ENCODE measurements at regions of chrX and their contacts with region 1.

Region 1: DNA sequence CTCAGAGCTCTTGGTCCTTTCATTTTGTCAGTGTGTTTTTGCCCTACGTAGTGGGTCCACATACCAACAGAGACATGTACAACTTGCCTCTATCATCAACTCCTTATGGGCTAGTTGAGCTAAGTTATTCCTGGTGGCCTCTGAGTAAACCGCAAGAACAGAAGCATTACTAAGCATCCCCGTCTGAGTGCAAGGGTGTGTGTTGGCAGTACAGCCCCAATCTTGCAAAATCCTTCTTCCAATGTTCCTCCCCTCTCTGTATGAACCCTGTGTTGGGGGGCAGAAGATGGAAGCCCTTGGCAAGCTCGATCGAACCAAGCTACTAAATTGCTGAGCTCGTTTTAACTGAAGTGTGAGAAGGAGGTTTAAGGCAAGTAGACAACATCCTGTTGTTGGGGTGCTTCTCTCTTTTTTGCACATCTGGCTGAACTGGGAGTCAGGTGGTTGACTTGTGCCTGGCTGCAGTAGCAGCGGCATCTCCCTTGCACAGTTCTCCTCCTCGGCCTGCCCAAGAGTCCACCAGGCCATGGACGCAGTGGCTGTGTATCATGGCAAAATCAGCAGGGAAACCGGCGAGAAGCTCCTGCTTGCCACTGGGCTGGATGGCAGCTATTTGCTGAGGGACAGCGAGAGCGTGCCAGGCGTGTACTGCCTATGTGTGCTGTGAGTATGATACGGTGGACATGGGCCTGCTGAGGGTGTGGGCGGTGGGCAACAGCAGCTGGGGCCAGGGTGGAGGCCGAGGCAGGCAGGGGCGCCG is at the start of gene SH2D1A:
- DNase-seq: peak; percentile 41
- ATAC-seq: peak; percentile 28
- H3K4me3 Mint-ChIP-seq: peak within 1 kb of the TSS; percentile 93
- H3K27ac Mint-ChIP-seq: peak within 1 kb of the TSS; percentile 97
- H3K4me1 Mint-ChIP-seq: peaks cover 46% of the 10 kb centered on the region
- H3K27me3 Mint-ChIP-seq: no peaks in the 10 kb centered on the region
- CTCF ChIP-seq: no peak
- total RNA-seq, gene SH2D1A: 40.9 to 43.2 TPM

Region 2: DNA sequence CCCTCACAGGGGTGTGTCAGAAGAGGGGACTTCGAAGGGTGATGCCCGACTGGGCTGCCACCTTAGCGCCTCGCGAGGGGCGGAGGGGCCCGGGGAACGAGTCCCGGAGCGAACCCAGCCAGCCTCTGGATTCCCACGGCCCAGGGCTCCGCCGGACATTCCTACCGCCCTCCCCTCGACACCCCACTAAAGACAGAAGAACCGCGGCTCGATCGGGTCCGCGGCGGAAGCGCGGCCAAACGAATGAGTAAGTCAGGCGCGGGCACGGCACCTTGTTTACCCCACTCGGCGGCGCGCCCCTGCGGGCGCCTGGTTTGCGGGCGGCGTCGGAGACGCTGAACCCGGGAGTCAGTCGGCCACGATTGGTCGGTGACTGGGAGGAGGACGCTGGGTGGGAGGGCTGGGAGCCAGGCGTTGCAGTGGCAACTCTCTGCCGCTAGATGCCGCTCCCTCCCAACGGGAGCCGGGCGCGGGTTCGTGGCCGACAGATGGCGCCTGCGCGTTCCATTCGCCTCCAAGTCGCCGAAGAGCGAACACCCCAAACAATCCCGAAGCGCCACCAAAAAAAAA is 386.2 kb before region 1 on chrX:
- CTCF ChIA-PET with region 1: no interaction called
- POLR2A ChIA-PET with region 1: interaction called, 3 read pairs
- intact Hi-C with region 1: loop called (anchors 5 kb)
- DNase-seq: peak; percentile 92
- ATAC-seq: peak; percentile 68
- H3K4me3 Mint-ChIP-seq: peak overlapping the region; percentile 98
- H3K27ac Mint-ChIP-seq: peak overlapping the region; percentile 100
- H3K4me1 Mint-ChIP-seq: peaks cover 10% of the 10 kb centered on the region
- H3K27me3 Mint-ChIP-seq: no peaks in the 10 kb centered on the region
- CTCF ChIP-seq: peak; percentile 66

Region 3: GRCh38 chrX:124217304-124218251 is 128.7 kb before region 1 on chrX:
- CTCF ChIA-PET with region 1: interaction called, 12 read pairs
- POLR2A ChIA-PET with region 1: interaction called, 48 read pairs
- intact Hi-C with region 1: loop called (anchors 2 kb)
- DNase-seq: peak; percentile 80
- ATAC-seq: peak; percentile 89
- H3K4me3 Mint-ChIP-seq: peak overlapping the region; percentile 52
- H3K27ac Mint-ChIP-seq: peak overlapping the region; percentile 98
- H3K4me1 Mint-ChIP-seq: peaks cover 83% of the 10 kb centered on the region
- H3K27me3 Mint-ChIP-seq: no peaks in the 10 kb centered on the region
- CTCF ChIP-seq: no peak

Region 4: GRCh38 chrX:124239911-124240310 is 106.4 kb before region 1 on chrX:
- CTCF ChIA-PET with region 1: interaction called, 4 read pairs
- POLR2A ChIA-PET with region 1: interaction called, 28 read pairs
- intact Hi-C with region 1: loop called (anchors 5 kb)
- DNase-seq: peak; percentile 73
- ATAC-seq: peak; percentile 81
- H3K4me3 Mint-ChIP-seq: peak overlapping the region; percentile 41
- H3K27ac Mint-ChIP-seq: peak overlapping the region; percentile 86
- H3K4me1 Mint-ChIP-seq: peaks cover 60% of the 10 kb centered on the region
- H3K27me3 Mint-ChIP-seq: no peaks in the 10 kb centered on the region
- CTCF ChIP-seq: no peak

Region 5: DNA sequence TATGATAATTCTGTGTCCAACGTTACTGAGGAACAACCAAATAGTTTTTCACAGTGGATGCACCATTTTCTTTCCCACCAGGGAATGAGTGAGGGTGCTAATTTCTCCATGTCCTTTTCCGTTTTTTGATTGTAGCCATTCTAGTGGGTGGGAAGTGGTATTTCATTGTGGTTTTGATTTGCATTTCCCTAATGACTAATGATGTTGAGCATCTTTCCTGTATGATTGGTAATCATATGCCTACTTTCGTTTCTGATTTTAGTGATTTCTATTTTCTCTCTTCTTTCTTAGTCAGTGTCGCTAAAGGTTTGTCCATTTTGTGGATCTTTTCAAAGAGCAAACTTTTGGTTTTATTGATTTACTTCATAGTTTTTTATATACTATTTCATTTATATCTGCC is 45.9 kb before region 1 on chrX:
- CTCF ChIA-PET with region 1: interaction called, 4 read pairs
- POLR2A ChIA-PET with region 1: no interaction called
- intact Hi-C with region 1: loop called (anchors 2 kb)
- DNase-seq: no peak
- ATAC-seq: peak; percentile 72
- H3K4me3 Mint-ChIP-seq: peak overlapping the region; percentile 67
- H3K27ac Mint-ChIP-seq: peak overlapping the region; percentile 85
- H3K4me1 Mint-ChIP-seq: peaks cover 35% of the 10 kb centered on the region
- H3K27me3 Mint-ChIP-seq: no peaks in the 10 kb centered on the region
- CTCF ChIP-seq: no peak

Region 6: GRCh38 chrX:124358800-124359383 is 12.6 kb after region 1 on chrX:
- CTCF ChIA-PET with region 1: no interaction called
- POLR2A ChIA-PET with region 1: interaction called, 28 read pairs
- intact Hi-C with region 1: no loop called
- DNase-seq: no peak
- ATAC-seq: peak; percentile 62
- H3K4me3 Mint-ChIP-seq: peak overlapping the region; percentile 79
- H3K27ac Mint-ChIP-seq: peak overlapping the region; percentile 95
- H3K4me1 Mint-ChIP-seq: peaks cover 49% of the 10 kb centered on the region
- H3K27me3 Mint-ChIP-seq: no peaks in the 10 kb centered on the region
- CTCF ChIP-seq: no peak

Region 7: DNA sequence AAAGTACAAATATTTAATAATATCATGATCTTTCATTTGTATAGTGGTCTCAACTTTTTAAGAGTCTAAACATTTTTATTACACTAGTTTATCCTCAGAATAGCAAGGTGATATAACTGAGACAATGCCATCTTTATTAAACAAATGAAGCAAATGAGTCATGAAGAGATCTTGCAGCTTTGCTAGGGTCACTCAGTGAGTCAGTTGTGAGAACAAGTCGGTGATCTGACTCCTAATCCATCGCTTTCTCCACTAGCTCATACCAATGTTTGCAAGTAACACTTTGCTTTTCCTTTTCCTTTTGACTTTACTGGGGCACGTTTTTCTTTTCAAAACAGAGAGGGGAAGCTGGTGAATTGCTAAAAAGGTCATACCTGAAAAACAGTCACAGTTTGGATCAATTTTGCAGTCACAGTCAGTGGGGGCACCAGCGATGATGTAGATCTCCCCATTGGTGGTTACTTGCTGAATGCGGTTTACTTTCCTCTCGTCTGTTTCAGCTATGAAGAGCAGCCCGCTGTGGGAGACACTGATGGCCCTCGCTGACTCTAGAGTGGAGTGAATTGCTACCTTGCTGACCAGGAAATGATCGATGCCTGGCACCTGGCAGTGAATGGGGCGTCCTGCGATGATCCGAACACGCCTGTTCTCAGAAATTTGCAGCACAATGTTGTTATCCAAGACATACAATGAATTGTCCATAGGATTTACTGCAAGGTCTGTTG is 75.8 kb after region 1 on chrX:
- CTCF ChIA-PET with region 1: no interaction called
- POLR2A ChIA-PET with region 1: no interaction called
- intact Hi-C with region 1: no loop called
- DNase-seq: no peak
- ATAC-seq: no peak
- H3K4me3 Mint-ChIP-seq: no peak overlapping the region
- H3K27ac Mint-ChIP-seq: no peak overlapping the region
- H3K4me1 Mint-ChIP-seq: no peaks in the 10 kb centered on the region
- H3K27me3 Mint-ChIP-seq: no peaks in the 10 kb centered on the region
- CTCF ChIP-seq: no peak

Measured in activated CD8-positive, alpha-beta T cell treated with anti-CD3 and anti-CD28 coated beads for 36 hours (primary cell).